Left ventricle myocardium superior (tissue), 1 donor: ENCODE measurements at regions of chr9 and their contacts with region 1.

Region 1: GRCh38 chr9:32552172-32552872 is at the starts of genes SMIM27 and TOPORS:
- DNase-seq: peak; percentile 96
- ATAC-seq: peak; percentile 94
- total RNA-seq, gene SMIM27: 19.1 TPM
- total RNA-seq, gene TOPORS: 9.4 TPM

Region 2: DNA sequence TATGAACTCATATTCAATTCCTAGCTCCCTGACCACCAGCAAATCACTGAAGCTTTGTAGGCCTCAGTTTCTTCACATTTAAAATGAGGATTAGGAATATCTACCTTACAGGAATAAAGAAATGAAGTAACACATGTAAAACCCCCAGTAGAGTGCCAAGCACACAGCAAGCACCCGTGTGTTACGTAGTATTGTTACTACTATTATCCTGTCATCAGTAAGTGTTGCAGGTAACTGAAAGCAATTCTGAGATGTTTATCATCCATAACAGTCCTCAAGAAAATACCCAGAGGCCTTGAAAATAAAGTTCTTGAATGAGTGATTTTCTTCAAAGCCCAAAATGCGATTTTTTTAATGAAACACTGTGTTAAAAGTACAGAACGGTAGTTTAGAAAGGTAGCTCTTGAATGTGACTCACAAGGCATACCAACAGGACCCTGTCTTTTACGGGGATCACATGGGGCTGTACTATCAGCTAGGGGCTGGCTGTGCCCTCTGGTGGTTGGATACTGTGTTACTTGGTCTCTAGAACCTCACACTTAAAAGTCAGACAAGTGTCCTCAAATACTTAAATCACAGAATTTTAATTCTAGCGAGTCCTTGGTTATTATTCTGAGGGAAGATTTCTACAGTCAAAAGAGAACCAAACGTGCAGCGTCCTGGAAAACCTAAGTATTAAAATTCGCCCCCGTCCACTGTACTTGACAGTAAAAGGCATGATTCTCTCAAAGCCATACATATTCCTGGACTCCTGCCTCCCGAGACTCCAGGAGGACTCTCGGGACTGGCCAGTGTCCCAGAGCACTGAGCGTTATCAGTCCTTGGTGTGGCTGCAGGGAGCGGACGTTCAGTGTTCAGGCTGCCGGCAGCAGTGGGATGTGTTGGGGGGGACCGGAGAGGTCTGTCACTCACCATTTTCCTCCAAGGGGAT is 19.9 kb after region 1 on chr9:
- intact Hi-C with region 1: loop called (anchors 2 kb)
- DNase-seq: peak; percentile 79
- ATAC-seq: peak; percentile 94

Region 3: DNA sequence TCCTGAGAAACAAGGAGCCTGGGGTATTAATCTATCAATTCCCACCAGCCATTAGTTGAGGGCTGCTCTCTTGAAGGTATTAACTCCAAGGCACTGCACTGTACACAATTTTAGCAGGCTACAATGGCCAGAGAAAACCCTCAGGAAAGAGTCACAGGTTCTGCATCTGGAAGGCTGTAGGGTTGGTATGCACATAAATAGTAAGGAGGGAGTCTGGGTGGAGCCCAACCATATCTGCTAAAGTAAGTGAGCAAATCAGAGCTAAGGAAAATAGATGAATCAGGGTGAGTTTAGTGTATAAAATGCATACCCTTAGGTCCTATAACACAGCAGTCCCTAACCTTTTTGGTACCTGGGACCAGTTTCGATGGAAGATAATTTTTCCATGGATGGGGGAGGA is 249.2 kb after region 1 on chr9:
- intact Hi-C with region 1: no loop called
- DNase-seq: no peak
- ATAC-seq: no peak